ENCODE measurements at regions of chr17 and their contacts with region 1.

Region 1: GRCh38 chr17:78736526-78737079 is 45.5 kb downstream of the CYTH1 start:
- DNase-seq: peak; percentile 89 to 92
- ATAC-seq: peak; percentile 97 to 99
- H3K4me3 ChIP-seq: peak overlapping the region; percentile 61
- H3K27ac ChIP-seq: peak overlapping the region; percentile 72 to 85
- H3K4me1 ChIP-seq: peaks cover 32% of the 10 kb centered on the region
- CTCF ChIP-seq: no peak
- EP300 ChIP-seq: no peak
- POLR2A ChIP-seq: peak; percentile 38
- RAD21 ChIP-seq: no peak

Region 2: GRCh38 chr17:78716814-78717393 is 19.7 kb before region 1 on chr17:
- CTCF ChIA-PET with region 1: interaction called, 19 read pairs
- POLR2A ChIA-PET with region 1: interaction called, 19 read pairs
- DNase-seq: peak; percentile 71 to 85
- ATAC-seq: peak; percentile 83 to 85
- H3K4me3 ChIP-seq: peak overlapping the region; percentile 42
- H3K27ac ChIP-seq: peak overlapping the region; percentile 77 to 88
- H3K4me1 ChIP-seq: peaks cover 49% of the 10 kb centered on the region
- CTCF ChIP-seq: no peak
- EP300 ChIP-seq: no peak
- POLR2A ChIP-seq: no peak
- RAD21 ChIP-seq: no peak

Region 3: GRCh38 chr17:78723001-78723796 is 13.4 kb before region 1 on chr17:
- CTCF ChIA-PET with region 1: interaction called, 19 read pairs
- POLR2A ChIA-PET with region 1: interaction called, 19 read pairs
- DNase-seq: no peak
- ATAC-seq: peak; percentile 10 to 12; a peak in 3 of 6 replicates
- H3K4me3 ChIP-seq: no peak overlapping the region
- H3K27ac ChIP-seq: peak overlapping the region in 1 of 2 experiments; percentile 61; a peak in 2 of 6 replicates
- H3K4me1 ChIP-seq: peaks cover 39% of the 10 kb centered on the region
- CTCF ChIP-seq: no peak
- EP300 ChIP-seq: no peak
- POLR2A ChIP-seq: no peak
- RAD21 ChIP-seq: no peak

Region 4: DNA sequence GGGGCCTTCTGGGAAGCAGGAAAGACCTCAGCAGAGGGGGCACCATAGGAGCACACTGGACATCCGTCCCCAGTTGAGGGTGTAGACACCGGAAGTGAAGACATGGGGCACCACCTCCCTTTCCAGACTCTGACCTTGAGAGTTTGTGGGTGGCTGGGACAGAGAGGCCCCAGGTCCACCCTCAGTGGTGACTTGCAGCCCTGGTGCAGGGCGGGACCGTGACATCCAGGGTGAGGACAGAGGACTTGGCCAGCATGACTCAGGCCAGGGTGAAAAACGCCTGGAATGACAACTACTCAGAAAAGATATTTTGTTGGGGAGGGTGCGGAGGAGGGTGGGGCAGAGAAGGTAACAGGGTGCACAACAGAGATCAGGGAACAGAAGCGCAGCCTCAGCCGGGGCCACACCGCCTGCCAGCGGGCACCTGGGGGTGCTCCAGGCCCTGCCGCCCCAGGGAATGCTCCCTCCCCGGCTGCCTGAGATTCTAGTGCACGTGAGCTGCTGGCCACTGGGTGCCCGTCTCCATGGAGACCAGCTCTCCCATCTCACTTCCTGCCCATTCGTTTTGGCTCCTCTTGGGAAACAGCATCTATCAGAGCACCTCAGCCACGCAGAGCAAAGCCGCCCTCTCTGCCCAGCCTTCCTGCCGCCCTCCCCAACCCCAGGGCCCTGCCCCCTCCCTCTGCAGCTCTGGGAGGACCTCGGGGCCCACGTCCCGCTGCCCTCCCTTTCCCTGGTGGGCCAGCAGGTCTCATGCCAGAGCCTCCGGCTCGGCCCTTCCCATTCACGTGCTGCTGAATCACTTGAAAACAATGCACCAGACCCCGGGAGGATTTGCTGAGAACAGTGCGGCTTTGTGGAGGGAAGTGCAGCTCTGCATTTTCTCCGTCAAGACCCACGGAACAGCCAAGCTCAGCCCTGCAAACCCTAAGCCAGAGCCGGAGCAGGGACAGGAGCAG is 146.8 kb after region 1 on chr17:
- CTCF ChIA-PET with region 1: no interaction called
- POLR2A ChIA-PET with region 1: no interaction called
- DNase-seq: peak; percentile 94 to 98
- ATAC-seq: peak; percentile 74 to 85
- H3K4me3 ChIP-seq: peak overlapping the region; percentile 14
- H3K27ac ChIP-seq: peak overlapping the region; percentile 86 to 91
- H3K4me1 ChIP-seq: peaks cover 47% of the 10 kb centered on the region
- CTCF ChIP-seq: 0 out of 3 replicates have a peak, but pooled peaks have one; percentile 5
- EP300 ChIP-seq: peak in 1 of 2 experiments; percentile 43; a peak in 1 of 5 replicates
- POLR2A ChIP-seq: no peak; the same call in 1 of the 2 replicates
- RAD21 ChIP-seq: peak; percentile 3 to 36; a peak in 2 of 5 replicates

Measured in A549 (cell line).